A673 (cell line): ENCODE measurements at regions of chr19 and their contacts with region 1.

Region 1: GRCh38 chr19:13277104-13277809 is 127.0 kb downstream of the IER2 start:
- DNase-seq: peak; percentile 91
- H3K4me3 ChIP-seq: no peak overlapping the region
- H3K27ac ChIP-seq: no peak overlapping the region
- H3K4me1 ChIP-seq: peaks cover 26% of the 10 kb centered on the region
- H3K27me3 ChIP-seq: no peaks in the 10 kb centered on the region
- CTCF ChIP-seq: peak; percentile 71

Region 2: GRCh38 chr19:13209484-13210338 is 67.5 kb before region 1 on chr19:
- CTCF ChIA-PET with region 1: no interaction called
- POLR2A ChIA-PET with region 1: no interaction called
- intact Hi-C with region 1: no loop called
- DNase-seq: no peak
- H3K4me3 ChIP-seq: no peak overlapping the region
- H3K27ac ChIP-seq: no peak overlapping the region
- H3K4me1 ChIP-seq: peaks cover 14% of the 10 kb centered on the region
- H3K27me3 ChIP-seq: no peaks in the 10 kb centered on the region
- CTCF ChIP-seq: no peak

Region 3: DNA sequence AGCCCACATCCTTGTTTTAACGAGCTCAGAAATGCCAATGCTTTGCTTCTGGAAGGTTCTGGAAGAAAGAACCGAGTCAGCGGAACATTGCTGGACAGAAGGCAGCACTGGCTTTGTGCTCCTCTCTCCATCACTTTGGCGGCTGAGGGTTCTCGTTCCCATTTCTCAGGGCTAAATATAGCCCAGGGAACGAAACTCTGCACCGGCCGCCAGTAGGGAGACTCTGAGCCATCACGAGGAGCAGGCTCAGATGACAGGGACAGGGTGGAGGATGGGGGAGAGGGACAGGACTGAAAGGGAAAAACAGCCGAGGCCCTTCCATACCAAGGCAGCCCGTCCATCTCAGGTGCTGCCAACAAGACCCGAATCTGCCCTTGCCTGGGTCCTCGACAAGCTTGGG is 62.6 kb after region 1 on chr19:
- CTCF ChIA-PET with region 1: no interaction called
- POLR2A ChIA-PET with region 1: no interaction called
- intact Hi-C with region 1: no loop called
- DNase-seq: no peak
- H3K4me3 ChIP-seq: no peak overlapping the region
- H3K27ac ChIP-seq: no peak overlapping the region
- H3K4me1 ChIP-seq: no peaks in the 10 kb centered on the region
- H3K27me3 ChIP-seq: no peaks in the 10 kb centered on the region
- CTCF ChIP-seq: no peak

Region 4: DNA sequence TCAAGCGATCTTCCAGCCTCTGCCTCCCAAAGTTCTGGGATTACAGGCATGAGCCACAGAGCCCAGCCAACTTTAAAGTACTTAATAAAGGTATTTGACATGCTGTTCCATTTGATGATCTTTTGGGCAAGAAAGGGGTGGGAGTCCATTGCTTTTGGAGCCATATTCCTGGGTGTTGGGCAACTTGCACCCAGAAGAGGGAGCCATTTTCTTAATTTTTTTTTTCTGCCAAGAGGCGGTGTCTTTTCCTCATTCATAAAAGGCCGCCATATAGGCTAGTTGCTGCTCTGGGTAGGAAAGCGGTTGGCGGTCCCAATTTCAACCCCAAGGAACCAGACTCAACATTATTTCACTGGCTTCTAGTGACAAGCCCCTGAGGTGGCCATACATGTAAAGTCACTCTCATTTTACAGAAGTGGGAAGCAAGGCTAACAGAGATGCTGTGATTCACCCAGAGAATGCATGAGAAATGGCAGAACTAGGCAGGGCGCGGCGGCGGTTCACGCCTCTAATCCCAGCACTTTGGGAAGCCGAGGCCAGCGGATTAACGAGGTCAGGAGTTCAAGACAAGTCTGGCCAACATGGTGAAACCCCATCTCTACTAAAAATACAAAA is 89.4 kb after region 1 on chr19:
- CTCF ChIA-PET with region 1: interaction called, 3 read pairs
- POLR2A ChIA-PET with region 1: no interaction called
- intact Hi-C with region 1: loop called (anchors 5 kb)
- DNase-seq: peak; percentile 71
- H3K4me3 ChIP-seq: no peak overlapping the region
- H3K27ac ChIP-seq: no peak overlapping the region
- H3K4me1 ChIP-seq: no peaks in the 10 kb centered on the region
- H3K27me3 ChIP-seq: no peaks in the 10 kb centered on the region
- CTCF ChIP-seq: peak; percentile 72

Region 5: DNA sequence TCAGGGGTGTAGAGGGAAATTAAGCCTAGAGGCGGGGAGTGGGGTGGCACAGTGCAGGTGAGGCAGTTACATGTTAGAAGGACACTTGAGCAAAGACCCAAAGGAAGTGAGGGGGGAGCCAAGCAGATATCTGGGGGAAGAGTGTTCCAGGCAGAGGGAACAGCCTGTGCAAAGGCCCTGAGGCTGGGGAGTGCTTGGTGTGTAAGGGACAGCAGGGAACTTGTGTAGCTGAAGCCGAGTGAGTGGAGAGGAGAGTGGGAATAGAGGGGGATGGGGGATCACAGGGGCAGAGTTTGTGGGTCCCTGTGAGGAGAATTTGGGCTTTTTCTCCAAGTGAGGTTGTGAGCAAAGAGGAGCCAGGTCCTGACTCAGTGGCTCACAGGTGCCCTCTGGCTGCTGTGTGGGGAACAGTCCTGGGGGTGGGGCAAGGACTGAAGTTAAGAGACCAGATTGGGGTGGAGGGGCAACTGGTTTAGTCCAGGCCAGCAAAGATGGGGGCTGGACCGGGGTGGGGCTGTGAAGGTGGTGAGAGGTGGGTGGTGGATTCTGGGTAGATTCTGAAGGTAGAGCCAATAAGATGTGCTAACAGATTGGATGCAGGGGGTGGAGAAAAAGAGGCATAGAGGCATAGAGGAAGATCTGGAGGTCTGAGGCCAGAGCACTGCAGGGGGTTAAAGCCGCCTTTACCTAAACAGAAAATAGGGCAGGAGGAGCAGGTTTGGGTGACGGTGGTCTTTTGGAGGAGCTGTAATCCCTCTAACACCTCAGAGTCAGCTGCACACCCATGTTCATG is 153.7 kb after region 1 on chr19:
- CTCF ChIA-PET with region 1: no interaction called
- POLR2A ChIA-PET with region 1: no interaction called
- intact Hi-C with region 1: loop called (anchors 2 kb)
- DNase-seq: peak; percentile 62
- H3K4me3 ChIP-seq: no peak overlapping the region
- H3K27ac ChIP-seq: no peak overlapping the region
- H3K4me1 ChIP-seq: no peaks in the 10 kb centered on the region
- H3K27me3 ChIP-seq: no peaks in the 10 kb centered on the region
- CTCF ChIP-seq: peak; percentile 72

Region 6: DNA sequence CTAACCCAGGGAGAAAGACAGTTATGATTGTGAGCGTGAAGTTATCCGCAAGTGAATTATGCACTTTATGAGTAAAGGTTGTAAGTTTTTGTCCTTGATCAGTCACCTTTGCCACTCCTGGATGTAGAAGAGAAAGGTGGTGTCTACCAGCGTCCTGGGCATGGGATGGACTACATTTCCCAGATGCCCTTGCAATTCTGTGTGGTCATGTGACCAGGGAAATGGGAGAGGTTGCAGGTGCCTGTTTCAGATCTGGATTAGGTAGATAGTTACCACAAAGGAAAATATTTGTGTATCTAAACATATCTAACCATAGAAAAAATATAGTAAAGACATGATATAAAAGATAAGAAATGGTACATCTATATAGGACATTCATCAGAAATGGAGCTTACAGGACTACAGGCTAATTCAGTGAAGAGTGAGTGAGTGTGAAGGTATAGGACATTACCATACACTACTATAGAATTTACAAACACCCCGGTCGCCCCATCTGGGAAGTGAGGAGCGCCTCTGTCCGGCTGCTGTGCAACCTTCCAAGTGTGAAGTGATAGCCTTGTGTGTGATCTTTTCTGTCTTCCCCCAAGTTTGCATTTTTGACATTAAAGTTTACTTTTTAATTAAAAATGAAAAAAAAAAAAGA is 280.6 kb after region 1 on chr19:
- CTCF ChIA-PET with region 1: interaction called, 12 read pairs
- POLR2A ChIA-PET with region 1: no interaction called
- intact Hi-C with region 1: no loop called
- DNase-seq: no peak
- H3K4me3 ChIP-seq: no peak overlapping the region
- H3K27ac ChIP-seq: no peak overlapping the region
- H3K4me1 ChIP-seq: no peaks in the 10 kb centered on the region
- H3K27me3 ChIP-seq: peaks cover 19% of the 10 kb centered on the region
- CTCF ChIP-seq: no peak

Region 7: GRCh38 chr19:13588957-13589833 is 311.9 kb after region 1 on chr19:
- CTCF ChIA-PET with region 1: interaction called, 7 read pairs
- POLR2A ChIA-PET with region 1: no interaction called
- intact Hi-C with region 1: loop called (anchors 1 kb)
- DNase-seq: peak; percentile 85
- H3K4me3 ChIP-seq: no peak overlapping the region
- H3K27ac ChIP-seq: no peak overlapping the region
- H3K4me1 ChIP-seq: no peaks in the 10 kb centered on the region
- H3K27me3 ChIP-seq: no peaks in the 10 kb centered on the region
- CTCF ChIP-seq: peak; percentile 97

Region 8: GRCh38 chr19:13718733-13719132 is 441.5 kb after region 1 on chr19:
- CTCF ChIA-PET with region 1: no interaction called
- POLR2A ChIA-PET with region 1: no interaction called
- intact Hi-C with region 1: loop called (anchors 5 kb)
- DNase-seq: peak; percentile 91
- H3K4me3 ChIP-seq: no peak overlapping the region
- H3K27ac ChIP-seq: no peak overlapping the region
- H3K4me1 ChIP-seq: no peaks in the 10 kb centered on the region
- H3K27me3 ChIP-seq: no peaks in the 10 kb centered on the region
- CTCF ChIP-seq: peak; percentile 67

Region 9: DNA sequence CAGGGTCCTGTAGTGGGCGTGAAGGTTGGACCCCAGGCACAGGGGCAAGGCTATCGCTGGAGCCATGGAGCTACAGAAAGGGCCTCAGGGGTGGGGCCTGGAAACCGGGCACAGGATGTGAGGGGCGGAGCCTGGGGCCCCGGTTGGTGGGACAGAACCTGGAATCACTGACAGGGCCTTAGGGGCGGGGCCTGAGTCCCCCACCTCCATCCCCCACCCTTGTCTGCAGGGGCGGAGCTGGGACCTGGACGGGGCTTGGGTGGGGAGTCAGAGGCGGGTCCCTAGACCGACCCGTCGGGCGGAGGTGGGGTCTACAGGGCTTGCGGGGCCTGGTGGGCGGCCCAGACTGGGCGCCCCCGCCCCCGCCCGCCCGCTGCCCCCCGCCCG is 701.1 kb after region 1 on chr19:
- CTCF ChIA-PET with region 1: interaction called, 15 read pairs
- POLR2A ChIA-PET with region 1: no interaction called
- intact Hi-C with region 1: no loop called
- DNase-seq: peak; percentile 92
- H3K4me3 ChIP-seq: peak overlapping the region; percentile 43
- H3K27ac ChIP-seq: peak overlapping the region; percentile 71
- H3K4me1 ChIP-seq: peaks cover 22% of the 10 kb centered on the region
- H3K27me3 ChIP-seq: no peaks in the 10 kb centered on the region
- CTCF ChIP-seq: no peak